ENCODE measurements at regions of chr1 and their contacts with region 1.

Region 1: GRCh38 chr1:29094954-29095353 is 28.7 kb downstream of the TMEM200B start:
- DNase-seq: peak; percentile 51
- ATAC-seq: peak; percentile 84; the same call in 1 of the 2 replicates
- H3K4me3 ChIP-seq: no peak overlapping the region
- H3K27ac ChIP-seq: peak overlapping the region; percentile 57
- H3K4me1 ChIP-seq: peaks cover 21% of the 10 kb centered on the region
- H3K27me3 ChIP-seq: no peaks in the 10 kb centered on the region
- CTCF ChIP-seq: no peak

Region 2: DNA sequence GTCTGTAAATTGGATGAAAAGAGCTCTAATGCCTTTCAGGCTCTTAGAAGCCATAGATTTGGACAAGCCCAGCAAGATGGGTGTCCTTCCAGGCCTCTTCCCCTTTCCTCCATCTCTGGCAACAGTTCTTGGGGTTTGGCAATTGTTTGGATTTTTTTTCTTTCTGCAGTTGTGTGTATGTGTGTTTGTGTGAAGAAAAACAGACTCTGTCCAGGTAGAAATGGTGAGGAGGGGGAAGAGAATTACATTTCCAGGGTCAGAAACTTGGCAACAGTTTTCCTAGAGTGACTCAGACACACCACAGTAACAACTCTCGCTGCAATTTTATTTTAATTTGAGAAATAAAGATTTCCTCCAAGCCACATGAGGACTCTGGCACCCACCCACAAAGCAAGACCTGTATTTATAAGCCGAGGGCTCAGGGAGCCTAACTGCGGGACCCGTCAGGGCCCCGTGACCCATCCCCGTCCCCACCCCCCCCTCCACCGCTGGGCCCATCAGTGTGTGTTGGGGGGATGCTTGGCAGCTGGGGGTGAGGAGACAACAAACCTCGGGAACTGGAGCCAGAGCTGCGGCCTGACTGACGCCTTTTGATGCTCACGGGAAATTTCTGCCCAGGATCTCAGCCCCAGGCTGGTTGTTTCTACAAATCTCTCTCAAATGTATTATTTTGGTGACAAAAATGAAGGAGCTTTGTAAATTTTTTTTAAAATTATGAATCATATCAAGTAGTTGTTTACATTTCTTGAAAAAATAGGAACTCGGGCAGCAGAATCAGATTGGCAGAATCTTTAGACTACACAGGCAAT is 24.4 kb after region 1 on chr1:
- CTCF ChIA-PET with region 1: no interaction called
- POLR2A ChIA-PET with region 1: no interaction called
- intact Hi-C with region 1: loop called (anchors 1 kb)
- DNase-seq: no peak
- ATAC-seq: no peak
- H3K4me3 ChIP-seq: no peak overlapping the region
- H3K27ac ChIP-seq: no peak overlapping the region
- H3K4me1 ChIP-seq: peaks cover 18% of the 10 kb centered on the region
- H3K27me3 ChIP-seq: no peaks in the 10 kb centered on the region
- CTCF ChIP-seq: no peak

Region 3: DNA sequence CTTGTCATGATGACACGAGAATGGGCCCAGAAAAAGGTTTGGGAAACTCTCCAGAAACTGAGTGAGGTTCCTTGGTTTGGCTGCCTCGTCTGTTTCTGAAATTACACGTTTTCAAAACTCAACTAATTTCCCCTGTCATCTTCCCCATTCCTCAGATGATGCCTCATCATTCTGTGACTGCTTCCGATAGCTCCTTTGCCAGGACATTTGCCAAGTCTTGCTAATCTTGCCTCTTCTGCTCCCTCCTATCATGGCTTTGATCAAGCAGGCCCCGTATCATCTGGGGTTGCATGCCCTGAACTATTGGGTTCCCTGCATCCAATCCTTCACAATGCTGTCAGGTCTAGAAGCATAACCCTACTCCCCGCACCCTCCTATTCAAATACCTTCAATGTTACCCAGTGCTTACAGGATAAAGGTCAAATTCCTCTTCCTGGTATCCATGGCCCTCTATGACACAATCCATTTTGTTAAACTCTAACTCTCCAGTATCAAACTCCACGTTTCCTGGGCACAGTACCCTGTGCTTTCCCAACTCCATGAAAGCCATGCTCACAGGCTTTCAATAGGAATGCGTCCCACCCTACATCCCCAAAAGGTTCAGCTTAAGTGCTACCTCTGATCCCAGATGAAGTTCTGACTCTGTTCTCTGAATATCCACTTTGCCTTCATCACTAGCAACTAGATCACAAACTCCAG is 50.9 kb after region 1 on chr1:
- CTCF ChIA-PET with region 1: no interaction called
- POLR2A ChIA-PET with region 1: no interaction called
- intact Hi-C with region 1: no loop called
- DNase-seq: peak; percentile 59
- ATAC-seq: peak; percentile 22
- H3K4me3 ChIP-seq: no peak overlapping the region
- H3K27ac ChIP-seq: peak overlapping the region; percentile 74
- H3K4me1 ChIP-seq: peaks cover 28% of the 10 kb centered on the region
- H3K27me3 ChIP-seq: no peaks in the 10 kb centered on the region
- CTCF ChIP-seq: no peak